Activated B cell treated with CpG ODN at 0.5 μM for 24 hours (primary cell): ENCODE measurements at regions of chr7 and their contacts with region 1.

Region 1: GRCh38 chr7:154927624-154928143 is 75.2 kb downstream of the PAXIP1 start:
- DNase-seq: peak; percentile 32
- ATAC-seq: peak; percentile 59
- H3K4me3 Mint-ChIP-seq: peak overlapping the region; percentile 96
- H3K27ac Mint-ChIP-seq: peak overlapping the region; percentile 99
- H3K4me1 Mint-ChIP-seq: peaks cover 28% of the 10 kb centered on the region
- H3K27me3 Mint-ChIP-seq: no peaks in the 10 kb centered on the region
- CTCF ChIP-seq: peak; percentile 22

Region 2: GRCh38 chr7:154879629-154880028 is 48.1 kb before region 1 on chr7:
- CTCF ChIA-PET with region 1: no interaction called
- POLR2A ChIA-PET with region 1: no interaction called
- intact Hi-C with region 1: no loop called
- DNase-seq: no peak
- ATAC-seq: no peak
- H3K4me3 Mint-ChIP-seq: no peak overlapping the region
- H3K27ac Mint-ChIP-seq: no peak overlapping the region
- H3K4me1 Mint-ChIP-seq: no peaks in the 10 kb centered on the region
- H3K27me3 Mint-ChIP-seq: peaks cover 4% of the 10 kb centered on the region
- CTCF ChIP-seq: no peak

Region 3: DNA sequence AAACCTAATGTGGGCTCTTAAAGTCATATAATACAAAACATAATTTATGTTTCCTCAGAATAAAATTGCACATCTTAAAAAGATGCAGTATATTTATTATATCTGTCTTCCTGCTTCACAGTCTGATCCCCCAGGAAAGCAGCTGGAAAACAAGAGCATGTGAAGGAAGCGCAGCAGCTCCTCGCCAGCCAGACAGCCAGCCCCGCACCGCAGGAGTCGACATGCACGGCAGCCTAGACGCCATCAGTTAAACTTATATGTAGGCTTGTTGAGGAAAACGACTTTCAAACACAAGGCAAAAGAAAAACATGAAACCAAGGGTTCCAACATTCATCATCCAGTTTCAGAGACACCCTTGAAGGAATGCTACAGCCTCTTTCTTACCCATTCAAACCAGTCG is 16.2 kb after region 1 on chr7:
- CTCF ChIA-PET with region 1: interaction called, 11 read pairs
- POLR2A ChIA-PET with region 1: interaction called, 3 read pairs
- intact Hi-C with region 1: no loop called
- DNase-seq: no peak
- ATAC-seq: no peak
- H3K4me3 Mint-ChIP-seq: no peak overlapping the region
- H3K27ac Mint-ChIP-seq: peak overlapping the region; percentile 41
- H3K4me1 Mint-ChIP-seq: no peaks in the 10 kb centered on the region
- H3K27me3 Mint-ChIP-seq: no peaks in the 10 kb centered on the region
- CTCF ChIP-seq: no peak

Region 4: GRCh38 chr7:155009570-155010157 is 82.0 kb after region 1 on chr7:
- CTCF ChIA-PET with region 1: interaction called, 31 read pairs
- POLR2A ChIA-PET with region 1: no interaction called
- intact Hi-C with region 1: loop called (anchors 1 kb)
- DNase-seq: no peak
- ATAC-seq: no peak
- H3K4me3 Mint-ChIP-seq: no peak overlapping the region
- H3K27ac Mint-ChIP-seq: no peak overlapping the region
- H3K4me1 Mint-ChIP-seq: peaks cover 5% of the 10 kb centered on the region
- H3K27me3 Mint-ChIP-seq: no peaks in the 10 kb centered on the region
- CTCF ChIP-seq: no peak

Region 5: GRCh38 chr7:155298834-155299534 is 371.3 kb after region 1 on chr7:
- CTCF ChIA-PET with region 1: interaction called, 6 read pairs
- POLR2A ChIA-PET with region 1: interaction called, 22 read pairs
- intact Hi-C with region 1: loop called (anchors 1 kb)
- DNase-seq: peak; percentile 86
- ATAC-seq: peak; percentile 72
- H3K4me3 Mint-ChIP-seq: peak overlapping the region; percentile 94
- H3K27ac Mint-ChIP-seq: peak overlapping the region; percentile 94
- H3K4me1 Mint-ChIP-seq: peaks cover 42% of the 10 kb centered on the region
- H3K27me3 Mint-ChIP-seq: no peaks in the 10 kb centered on the region
- CTCF ChIP-seq: no peak

Region 6: DNA sequence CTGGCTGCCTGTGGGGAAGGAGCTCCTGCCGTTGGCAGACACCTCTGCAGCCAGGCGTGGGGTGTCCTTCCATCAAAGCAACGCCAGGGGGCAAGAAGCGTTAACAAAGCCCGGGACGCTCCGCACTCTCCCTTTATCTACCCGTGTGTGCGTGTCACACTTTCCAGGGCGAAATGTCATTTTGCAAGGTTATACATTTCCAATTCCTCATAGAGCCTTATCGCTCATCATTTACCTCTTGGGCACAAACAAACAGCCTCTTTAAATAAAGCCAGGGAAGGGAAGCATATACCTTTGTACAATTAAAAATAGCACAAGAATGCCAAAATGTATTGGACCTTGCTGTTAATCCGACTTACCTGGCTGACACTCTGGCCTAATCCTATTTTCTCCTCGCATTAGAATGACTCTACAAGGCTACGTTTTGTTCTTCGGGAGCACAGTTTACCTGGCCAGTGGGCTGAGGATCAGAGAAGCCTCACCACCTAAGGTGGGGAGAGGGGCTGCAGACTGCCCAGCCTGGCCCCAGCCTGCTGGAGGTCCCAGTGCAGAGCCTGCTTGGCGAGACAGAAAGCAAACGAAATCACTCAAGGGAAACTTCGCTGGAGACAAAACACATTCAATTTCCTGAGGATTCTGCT is 452.7 kb after region 1 on chr7:
- CTCF ChIA-PET with region 1: interaction called, 11 read pairs
- POLR2A ChIA-PET with region 1: interaction called, 3 read pairs
- intact Hi-C with region 1: loop called (anchors 10 kb)
- DNase-seq: peak; percentile 51
- ATAC-seq: peak; percentile 92
- H3K4me3 Mint-ChIP-seq: no peak overlapping the region
- H3K27ac Mint-ChIP-seq: no peak overlapping the region
- H3K4me1 Mint-ChIP-seq: peaks cover 41% of the 10 kb centered on the region
- H3K27me3 Mint-ChIP-seq: peaks cover 80% of the 10 kb centered on the region
- CTCF ChIP-seq: peak; percentile 31

Region 7: DNA sequence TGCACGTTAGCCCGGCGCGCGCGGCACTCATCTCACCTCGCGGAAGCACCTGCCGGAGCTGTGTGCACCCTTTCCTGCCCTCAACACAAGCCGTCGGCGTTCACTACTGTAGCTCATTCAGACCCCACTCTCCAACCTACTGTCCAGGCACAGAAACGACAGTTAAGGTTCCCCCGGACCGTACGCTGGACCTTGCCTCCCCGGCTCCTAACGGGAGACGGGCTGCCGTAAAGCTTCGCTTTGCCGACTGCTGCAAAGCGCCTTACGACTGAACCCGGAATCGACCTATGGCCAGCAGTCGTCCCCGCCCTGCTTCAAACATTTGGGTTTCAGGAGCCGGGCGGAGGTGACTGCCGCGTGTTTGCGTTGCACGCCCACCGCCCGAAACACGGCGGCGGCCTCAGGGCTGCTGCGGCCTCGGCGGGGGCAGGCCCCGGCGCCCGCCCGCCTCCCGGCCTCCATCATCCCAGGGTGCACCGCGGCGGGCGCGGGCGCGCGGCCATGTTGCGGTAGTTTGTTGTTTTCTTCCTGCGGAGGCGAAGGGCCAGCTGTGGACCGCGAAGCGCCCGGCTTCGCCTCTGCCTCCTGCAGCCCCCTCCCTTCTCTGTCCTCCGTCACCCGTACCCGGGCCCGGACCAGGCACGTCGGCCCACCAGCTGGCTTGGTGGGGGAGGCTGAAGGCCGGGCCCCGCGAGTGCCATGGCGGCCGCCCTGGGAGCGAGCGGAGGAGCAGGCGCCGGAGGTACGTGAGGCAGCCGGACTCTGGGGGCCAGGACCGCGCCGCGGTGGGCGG is 716.7 kb after region 1 on chr7 and contains the start of gene RBM33:
- CTCF ChIA-PET with region 1: no interaction called
- POLR2A ChIA-PET with region 1: interaction called, 8 read pairs
- intact Hi-C with region 1: loop called (anchors 1 kb)
- DNase-seq: peak; percentile 86
- ATAC-seq: peak; percentile 74
- H3K4me3 Mint-ChIP-seq: peak within 1 kb of the TSS; percentile 98
- H3K27ac Mint-ChIP-seq: peak within 1 kb of the TSS; percentile 98
- H3K4me1 Mint-ChIP-seq: peaks cover 47% of the 10 kb centered on the region
- H3K27me3 Mint-ChIP-seq: no peaks in the 10 kb centered on the region
- CTCF ChIP-seq: no peak
- total RNA-seq, gene RBM33: 107 and 117 TPM in 2 replicates

Region 8: GRCh38 chr7:156473476-156474240 is 1546.0 kb after region 1 on chr7:
- CTCF ChIA-PET with region 1: no interaction called
- POLR2A ChIA-PET with region 1: no interaction called
- intact Hi-C with region 1: loop called (anchors 5 kb)
- DNase-seq: no peak
- ATAC-seq: no peak
- H3K4me3 Mint-ChIP-seq: no peak overlapping the region
- H3K27ac Mint-ChIP-seq: no peak overlapping the region
- H3K4me1 Mint-ChIP-seq: no peaks in the 10 kb centered on the region
- H3K27me3 Mint-ChIP-seq: peaks cover 11% of the 10 kb centered on the region
- CTCF ChIP-seq: no peak